Gastrocnemius medialis (tissue), 4 donors: ENCODE measurements at regions of chr5 and their contacts with region 1.

Region 1: GRCh38 chr5:34929150-34929719 is at the start of gene DNAJC21:
- DNase-seq: peak; percentile 96 to 98
- ATAC-seq: peak; percentile 89 to 90
- H3K4me3 ChIP-seq: peak within 1 kb of the TSS; percentile 83 to 98 (median 84)
- H3K27ac ChIP-seq: peak within 1 kb of the TSS; percentile 94 to 100 (median 96)
- H3K4me1 ChIP-seq: peaks cover 11 to 19% of the 10 kb centered on the region in 2 donors
- H3K27me3 ChIP-seq: no peaks in the 10 kb centered on the region
- CTCF ChIP-seq: no peak
- POLR2A ChIP-seq: no peak
- total RNA-seq, gene DNAJC21: 40.9 to 81.7 (median 74.7) TPM

Region 2: GRCh38 chr5:34656001-34656699 is 273.1 kb before region 1 on chr5 and contains the start of gene RAI14:
- in situ Hi-C with region 1: no loop called
- intact Hi-C with region 1: loop called (anchors 10 kb)
- DNase-seq: peak; percentile 19 to 28
- ATAC-seq: peak; percentile 51 to 61
- H3K4me3 ChIP-seq: peak within 1 kb of the TSS; percentile 62 to 77 (median 66)
- H3K27ac ChIP-seq: peak within 1 kb of the TSS; percentile 63 to 75 (median 73)
- H3K4me1 ChIP-seq: peaks cover 11 to 12% of the 10 kb centered on the region in 2 donors
- H3K27me3 ChIP-seq: peaks cover 11 to 21% (median 15%) of the 10 kb centered on the region in 3 donors
- CTCF ChIP-seq: no peak
- POLR2A ChIP-seq: peak; percentile 23 to 30
- total RNA-seq, gene RAI14: 1.1 to 3.6 (median 1.7) TPM

Region 3: DNA sequence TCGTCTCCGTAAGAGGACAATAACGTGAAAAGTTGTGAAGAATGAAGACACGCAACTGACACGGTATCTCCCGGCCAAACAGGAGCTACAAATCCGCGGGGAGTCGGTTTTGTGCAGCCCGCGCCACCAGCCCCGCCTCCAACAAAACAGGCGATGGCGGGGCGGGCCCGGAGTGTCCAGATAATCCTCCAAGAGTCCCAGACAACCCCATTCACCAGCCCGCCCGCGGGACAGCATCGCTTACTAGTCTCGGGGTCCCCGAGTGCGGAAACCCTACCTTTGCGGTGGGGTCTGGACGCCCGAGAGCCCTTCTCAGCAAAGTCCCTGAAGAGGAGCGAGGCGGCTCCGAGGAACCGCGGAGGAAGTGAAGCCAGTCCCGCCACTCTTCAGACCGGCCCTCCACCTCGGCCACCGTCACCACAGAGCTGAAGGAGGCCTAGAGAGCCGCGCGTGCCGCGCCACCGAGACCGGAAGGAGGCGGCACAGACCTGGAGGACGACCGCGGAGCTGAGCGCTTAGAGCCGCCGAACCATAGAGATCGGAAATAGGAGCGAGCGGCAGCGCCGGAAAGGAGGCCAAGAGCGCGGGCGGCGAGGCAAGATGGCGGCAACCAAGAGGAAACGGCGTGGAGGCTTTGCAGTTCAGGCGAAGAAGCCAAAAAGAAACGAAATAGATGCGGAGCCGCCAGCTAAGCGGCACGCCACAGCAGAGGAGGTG is 13.9 kb before region 1 on chr5 and contains the starts of genes BRIX1 and RAD1:
- in situ Hi-C with region 1: no loop called
- intact Hi-C with region 1: loop called (anchors 1 kb)
- DNase-seq: peak; percentile 93 to 95
- ATAC-seq: peak; percentile 98 to 99
- H3K4me3 ChIP-seq: peak within 1 kb of the TSS; percentile 74 to 96 (median 88)
- H3K27ac ChIP-seq: peak within 1 kb of the TSS; percentile 78 to 92 (median 84)
- H3K4me1 ChIP-seq: peaks cover 20 to 23% of the 10 kb centered on the region in 2 donors
- H3K27me3 ChIP-seq: no peaks in the 10 kb centered on the region
- CTCF ChIP-seq: peak in 1 of 5 experiments; percentile 38
- POLR2A ChIP-seq: peak; percentile 44 to 53
- total RNA-seq, gene BRIX1: 9.2 to 15.7 (median 12.0) TPM
- total RNA-seq, gene RAD1: 7.8 to 21.2 (median 18.1) TPM

Region 4: DNA sequence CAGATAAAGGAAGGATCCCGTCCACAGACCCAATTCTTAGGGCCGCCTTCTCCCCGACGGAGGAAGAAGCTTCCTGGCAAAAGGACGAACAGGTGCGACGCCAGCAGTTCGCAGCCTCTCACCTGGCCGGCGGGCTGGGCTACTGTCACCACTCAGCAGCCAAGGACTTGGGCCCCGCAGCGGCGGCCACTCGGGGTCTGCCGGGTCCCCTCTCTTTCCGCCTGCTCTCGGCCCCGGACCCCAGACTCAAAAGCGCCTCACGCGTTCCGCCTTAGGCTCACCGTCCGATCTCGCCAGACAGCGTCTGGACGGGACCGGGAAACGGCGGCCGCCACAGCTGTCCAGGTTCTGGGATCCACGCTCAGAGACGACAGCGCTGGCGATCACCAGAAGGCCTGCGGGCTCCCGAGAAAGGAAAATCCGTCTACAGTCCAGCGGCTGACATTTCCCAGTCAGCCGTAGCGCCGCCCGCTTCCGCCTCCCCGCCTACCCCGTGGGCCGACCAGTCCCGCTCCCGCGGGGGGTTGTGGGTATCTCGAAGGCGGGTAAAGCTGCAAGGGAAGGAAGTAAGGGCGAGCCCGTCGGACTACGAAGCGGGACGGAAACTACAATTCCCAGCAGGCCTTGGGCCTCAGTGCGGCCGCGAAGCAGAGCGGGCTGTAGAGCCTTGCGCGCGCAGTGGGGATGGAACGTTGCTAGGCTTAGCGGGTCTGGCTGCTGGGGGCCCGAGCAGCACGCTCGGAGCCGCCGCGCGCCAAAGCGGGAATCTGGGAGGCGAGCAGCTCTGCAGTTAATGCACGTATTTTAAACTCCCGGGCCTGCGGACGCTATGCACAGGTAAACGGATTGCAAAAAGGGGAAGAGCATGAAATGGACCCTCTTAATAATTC is 1222.4 kb after region 1 on chr5 and contains the starts of genes LMBRD2 and SKP2:
- in situ Hi-C with region 1: loop called in 1 of 4 experiments (anchors 10 kb)
- intact Hi-C with region 1: no loop called
- DNase-seq: peak; percentile 96
- ATAC-seq: peak; percentile 99
- H3K4me3 ChIP-seq: peak within 1 kb of the TSS; percentile 89 to 99 (median 92)
- H3K27ac ChIP-seq: peak within 1 kb of the TSS; percentile 88 to 95 (median 92)
- H3K4me1 ChIP-seq: peaks cover 32 to 41% of the 10 kb centered on the region in 2 donors
- H3K27me3 ChIP-seq: no peaks in the 10 kb centered on the region
- CTCF ChIP-seq: no peak
- POLR2A ChIP-seq: peak; percentile 58 to 74
- total RNA-seq, gene LMBRD2: 12.2 to 29.0 (median 21.3) TPM
- total RNA-seq, gene SKP2: 2.8 to 6.7 (median 3.1) TPM